Panc1 (cell line): ENCODE measurements at regions of chrX and their contacts with region 1.

Region 1: GRCh38 chrX:16931855-16932575 is 14.4 kb upstream of the REPS2 start:
- DNase-seq: no peak
- ATAC-seq: no peak
- H3K4me3 ChIP-seq: no peak overlapping the region
- H3K27ac ChIP-seq: no peak overlapping the region
- H3K4me1 ChIP-seq: no peaks in the 10 kb centered on the region
- H3K27me3 ChIP-seq: no peaks in the 10 kb centered on the region
- CTCF ChIP-seq: no peak

Region 2: DNA sequence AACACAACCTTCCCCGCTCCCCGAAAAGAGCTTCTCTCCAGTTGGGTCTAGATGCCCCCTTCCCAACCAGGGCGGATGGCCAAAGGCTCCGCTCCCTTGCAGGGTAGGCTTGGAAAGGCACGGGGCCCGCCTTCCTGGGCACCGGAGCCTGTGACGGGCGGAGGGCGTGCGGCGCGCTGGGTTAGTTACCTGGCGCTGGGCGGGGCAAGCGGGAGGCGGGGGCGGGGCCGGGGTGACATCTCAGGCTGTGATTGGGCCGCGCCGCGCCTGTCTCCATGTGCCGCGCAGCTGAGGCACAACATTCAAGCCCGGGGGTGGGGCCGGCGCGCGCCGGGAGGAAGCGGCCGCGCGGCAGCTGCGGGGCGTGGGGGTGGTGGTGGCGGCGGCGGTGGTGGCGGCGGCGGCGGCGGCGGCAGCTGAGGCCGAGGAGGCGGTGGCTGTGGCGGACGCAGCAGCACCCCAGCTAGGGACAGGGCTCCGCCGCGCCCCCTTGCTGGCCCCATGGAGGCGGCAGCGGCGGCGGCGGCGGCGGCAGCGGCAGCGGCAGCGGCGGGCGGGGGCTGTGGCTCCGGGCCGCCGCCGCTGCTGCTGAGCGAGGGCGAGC is 14.4 kb after region 1 on chrX and contains the start of gene REPS2:
- CTCF ChIA-PET with region 1: no interaction called
- POLR2A ChIA-PET with region 1: interaction called, 11 read pairs
- in situ Hi-C with region 1: no loop called
- intact Hi-C with region 1: no loop called
- DNase-seq: no peak
- ATAC-seq: peak; percentile 98
- H3K4me3 ChIP-seq: peak within 1 kb of the TSS; percentile 41 to 55
- H3K27ac ChIP-seq: no peak within 1 kb of the TSS
- H3K4me1 ChIP-seq: no peaks in the 10 kb centered on the region
- H3K27me3 ChIP-seq: no peaks in the 10 kb centered on the region
- CTCF ChIP-seq: peak; percentile 18; the same call in 1 of the 2 replicates
- total RNA-seq, gene REPS2: 4.5 TPM